ENCODE measurements at regions of chr3 and their contacts with region 1.

Region 1: DNA sequence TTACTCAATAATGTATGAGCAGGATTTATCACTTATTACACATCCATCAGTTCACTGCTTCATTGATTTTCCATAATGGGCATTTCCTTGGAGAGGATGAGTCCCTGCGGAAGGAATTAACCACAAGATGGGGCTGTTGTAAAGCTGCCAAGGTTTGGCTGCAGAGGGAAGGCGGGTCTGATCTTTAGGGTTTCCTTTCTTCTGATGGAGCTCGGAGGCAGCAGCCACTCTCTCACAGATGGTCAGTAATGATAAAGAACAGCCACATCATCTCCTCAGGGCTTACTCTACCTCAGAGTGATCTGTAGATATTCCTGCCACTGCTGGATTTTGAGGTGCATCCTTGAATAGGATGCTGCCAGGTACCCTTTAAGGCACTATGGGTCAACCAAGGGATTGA is 115.2 kb downstream of the USP13 start:
- DNase-seq: peak; percentile 32
- H3K4me3 ChIP-seq: no peak overlapping the region
- H3K27ac ChIP-seq: no peak overlapping the region
- H3K27me3 ChIP-seq: no peaks in the 10 kb centered on the region
- CTCF ChIP-seq: peak; percentile 79

Region 2: DNA sequence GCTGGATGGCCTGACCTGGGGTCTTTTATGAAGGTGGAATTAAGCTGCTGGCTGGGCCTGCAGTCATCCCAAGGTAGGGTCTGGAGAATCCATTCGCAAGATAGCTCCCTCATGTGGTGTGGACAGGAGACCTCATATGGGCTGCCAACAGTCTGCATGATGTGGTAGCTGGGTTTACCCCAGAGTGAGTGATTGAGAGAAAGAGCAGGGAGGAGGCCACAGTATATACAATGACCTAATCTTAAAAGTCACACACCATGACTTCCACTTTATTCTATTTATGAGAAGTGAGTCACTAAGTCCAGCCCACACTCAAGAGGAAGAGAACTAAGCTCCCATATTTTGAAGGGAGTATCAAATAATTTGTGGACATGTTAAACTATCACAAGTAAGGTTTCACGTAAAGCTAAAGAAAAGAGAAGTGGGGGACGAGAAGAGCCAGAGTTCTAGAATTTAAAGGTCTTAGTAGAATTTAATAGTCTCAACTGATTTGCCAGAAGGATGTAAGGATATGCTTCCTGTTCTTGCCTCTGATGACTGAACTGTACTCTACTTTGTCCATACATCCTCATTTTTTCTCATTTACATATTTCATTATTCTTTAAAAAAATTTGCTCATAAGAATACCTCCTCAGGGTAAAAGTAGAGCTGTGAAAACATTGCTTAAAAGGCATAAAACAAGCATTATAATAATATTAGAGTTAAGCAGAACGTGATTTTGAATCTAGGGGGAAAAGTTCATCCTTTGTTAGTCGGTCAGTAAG is 84.2 kb after region 1 on chr3:
- CTCF ChIA-PET with region 1: interaction called, 20 read pairs
- POLR2A ChIA-PET with region 1: no interaction called
- DNase-seq: peak; percentile 59
- H3K4me3 ChIP-seq: no peak overlapping the region
- H3K27ac ChIP-seq: no peak overlapping the region
- H3K27me3 ChIP-seq: no peaks in the 10 kb centered on the region
- CTCF ChIP-seq: peak; percentile 51

Region 3: GRCh38 chr3:180594631-180595558 is 826.8 kb after region 1 on chr3:
- CTCF ChIA-PET with region 1: interaction called, 26 read pairs
- POLR2A ChIA-PET with region 1: no interaction called
- DNase-seq: peak; percentile 37
- H3K4me3 ChIP-seq: no peak overlapping the region
- H3K27ac ChIP-seq: no peak overlapping the region
- H3K27me3 ChIP-seq: no peaks in the 10 kb centered on the region
- CTCF ChIP-seq: peak; percentile 68

Measured in AG04450 (cell line).